Activated CD4-positive, alpha-beta T cell treated with anti-CD3 and anti-CD28 coated beads, Interleukin-2, amount 10 ng/mL, durations not matched to agents 24 days and 14 days (primary cell): ENCODE measurements at regions of chr1 and their contacts with region 1.

Region 1: GRCh38 chr1:174769961-174770549 is 229.7 kb upstream of the CACYBP start:
- DNase-seq: peak; percentile 75
- H3K4me3 Mint-ChIP-seq: no peak overlapping the region
- H3K27ac Mint-ChIP-seq: no peak overlapping the region
- H3K4me1 Mint-ChIP-seq: peaks cover 8% of the 10 kb centered on the region
- H3K27me3 Mint-ChIP-seq: no peaks in the 10 kb centered on the region

Region 2: DNA sequence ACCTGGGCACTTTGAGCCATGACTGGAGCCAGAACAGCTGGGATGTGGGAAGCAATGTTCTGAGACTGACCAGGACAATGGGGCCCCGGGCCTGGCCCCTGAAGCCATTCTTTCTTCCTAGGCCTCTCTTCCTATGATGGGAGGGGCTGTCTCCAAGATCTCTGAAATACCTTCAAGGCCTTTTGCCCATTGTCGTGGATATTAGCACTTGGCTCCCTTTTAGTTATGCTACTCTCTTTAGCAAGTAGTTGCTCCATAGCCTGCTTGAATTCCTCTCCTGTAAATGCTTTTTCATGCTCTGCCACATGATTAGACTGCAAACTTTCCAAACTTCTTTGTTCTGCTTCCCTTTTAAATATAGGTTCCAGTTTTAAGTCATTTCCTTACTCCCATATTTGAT is 33.2 kb before region 1 on chr1:
- intact Hi-C with region 1: no loop called
- DNase-seq: no peak
- H3K4me3 Mint-ChIP-seq: no peak overlapping the region
- H3K27ac Mint-ChIP-seq: no peak overlapping the region
- H3K4me1 Mint-ChIP-seq: no peaks in the 10 kb centered on the region
- H3K27me3 Mint-ChIP-seq: peaks cover 2% of the 10 kb centered on the region

Region 3: GRCh38 chr1:174850726-174851125 is 80.7 kb after region 1 on chr1:
- intact Hi-C with region 1: no loop called
- DNase-seq: no peak
- H3K4me3 Mint-ChIP-seq: no peak overlapping the region
- H3K27ac Mint-ChIP-seq: no peak overlapping the region
- H3K4me1 Mint-ChIP-seq: peaks cover 2% of the 10 kb centered on the region
- H3K27me3 Mint-ChIP-seq: no peaks in the 10 kb centered on the region

Region 4: DNA sequence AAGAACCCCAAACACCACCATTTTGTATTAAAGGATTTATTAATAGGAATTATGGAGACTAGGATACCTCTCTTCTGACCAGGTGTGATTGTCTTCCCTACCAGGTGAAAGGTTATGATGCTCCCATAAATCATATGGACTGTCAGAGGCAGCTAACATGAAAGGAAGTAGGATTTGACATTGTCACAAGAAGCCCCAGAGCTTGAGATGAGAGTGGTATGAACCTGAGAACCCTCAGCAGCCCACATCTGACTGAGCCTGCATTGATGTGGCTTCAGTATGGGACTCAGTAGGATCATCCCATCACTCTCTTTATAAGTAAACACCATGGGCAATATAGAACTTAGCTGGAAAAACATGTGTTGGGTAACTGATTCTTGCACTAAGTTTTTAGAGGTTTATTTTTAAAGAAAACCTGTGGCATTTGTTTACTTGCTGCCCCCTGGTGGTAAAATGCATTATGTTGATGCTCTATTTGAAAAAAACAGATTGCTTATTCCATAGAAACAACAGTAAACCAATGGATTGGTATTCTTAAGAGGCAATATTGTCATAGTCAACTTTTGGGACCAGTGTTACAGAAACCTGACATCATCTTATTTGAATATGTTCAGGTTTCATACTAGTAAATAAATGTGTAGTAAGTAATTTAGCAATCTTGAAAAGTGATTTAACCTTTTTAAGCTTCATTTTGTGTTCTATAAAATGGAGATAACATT is 213.1 kb after region 1 on chr1:
- intact Hi-C with region 1: loop called (anchors 1 kb)
- DNase-seq: peak; percentile 88
- H3K4me3 Mint-ChIP-seq: no peak overlapping the region
- H3K27ac Mint-ChIP-seq: no peak overlapping the region
- H3K4me1 Mint-ChIP-seq: peaks cover 16% of the 10 kb centered on the region
- H3K27me3 Mint-ChIP-seq: no peaks in the 10 kb centered on the region

Region 5: DNA sequence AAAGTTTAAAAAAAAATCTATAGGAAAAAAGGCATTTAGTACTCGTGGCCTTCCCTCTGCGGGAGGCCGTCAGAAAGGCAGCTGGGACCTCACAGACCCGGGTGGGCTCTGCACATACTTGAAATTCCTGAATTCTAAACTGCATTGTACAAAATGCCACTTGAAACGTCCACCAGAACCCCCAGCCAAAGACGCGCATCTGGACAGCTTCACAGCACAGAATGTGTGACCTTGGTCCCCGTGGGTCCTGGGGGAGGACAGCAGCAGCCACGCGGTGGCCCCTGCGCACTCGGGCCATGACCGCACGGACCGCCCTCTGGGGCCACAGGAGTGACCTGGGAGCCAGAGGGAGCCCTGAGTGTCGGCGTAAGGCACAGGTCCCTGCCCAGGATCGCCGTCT is 273.8 kb after region 1 on chr1:
- intact Hi-C with region 1: no loop called
- DNase-seq: no peak
- H3K4me3 Mint-ChIP-seq: no peak overlapping the region
- H3K27ac Mint-ChIP-seq: no peak overlapping the region
- H3K4me1 Mint-ChIP-seq: no peaks in the 10 kb centered on the region
- H3K27me3 Mint-ChIP-seq: peaks cover 28% of the 10 kb centered on the region

Region 6: DNA sequence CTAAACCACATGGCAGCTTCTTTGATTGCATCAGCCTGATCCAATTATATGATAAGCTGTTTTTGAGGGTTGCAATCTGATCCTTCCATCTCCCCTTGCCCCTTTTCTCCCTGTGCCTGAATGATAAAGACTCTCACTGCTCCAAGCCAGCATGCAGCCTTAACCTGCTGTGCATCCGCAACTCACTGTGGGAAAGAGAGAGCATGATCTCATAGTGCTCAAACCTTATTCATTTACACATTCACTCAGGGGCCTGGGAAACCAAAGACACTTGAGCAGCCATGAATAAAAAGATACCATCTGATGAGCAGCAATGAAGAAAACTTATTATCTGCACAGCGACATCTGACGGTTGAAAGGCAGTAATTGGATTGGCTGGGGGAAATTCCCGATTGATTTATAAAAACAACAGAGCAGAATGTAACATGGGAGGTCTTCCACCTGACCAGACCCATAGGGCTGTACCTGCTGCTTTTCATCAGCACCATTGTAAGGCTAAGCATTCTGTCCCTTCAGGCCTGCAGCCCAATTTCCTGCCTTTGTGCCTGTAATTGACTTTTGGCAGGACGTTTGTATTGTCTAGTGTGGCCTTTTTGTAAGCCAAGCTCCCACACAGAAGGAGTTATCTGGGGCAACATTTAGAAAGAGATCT is 360.1 kb after region 1 on chr1:
- intact Hi-C with region 1: loop called (anchors 5 kb)
- DNase-seq: no peak
- H3K4me3 Mint-ChIP-seq: no peak overlapping the region
- H3K27ac Mint-ChIP-seq: no peak overlapping the region
- H3K4me1 Mint-ChIP-seq: no peaks in the 10 kb centered on the region
- H3K27me3 Mint-ChIP-seq: peaks cover 14% of the 10 kb centered on the region